Activated naive CD4-positive, alpha-beta T cell treated with anti-CD3 and anti-CD28 coated beads for 36 hours (primary cell): ENCODE measurements at regions of chr17 and their contacts with region 1.

Region 1: GRCh38 chr17:69438776-69439175 is 24.3 kb downstream of the MAP2K6 start:
- DNase-seq: no peak
- H3K4me3 Mint-ChIP-seq: no peak overlapping the region
- H3K27ac Mint-ChIP-seq: no peak overlapping the region
- H3K4me1 Mint-ChIP-seq: peaks cover 6% of the 10 kb centered on the region
- H3K27me3 Mint-ChIP-seq: no peaks in the 10 kb centered on the region

Region 2: DNA sequence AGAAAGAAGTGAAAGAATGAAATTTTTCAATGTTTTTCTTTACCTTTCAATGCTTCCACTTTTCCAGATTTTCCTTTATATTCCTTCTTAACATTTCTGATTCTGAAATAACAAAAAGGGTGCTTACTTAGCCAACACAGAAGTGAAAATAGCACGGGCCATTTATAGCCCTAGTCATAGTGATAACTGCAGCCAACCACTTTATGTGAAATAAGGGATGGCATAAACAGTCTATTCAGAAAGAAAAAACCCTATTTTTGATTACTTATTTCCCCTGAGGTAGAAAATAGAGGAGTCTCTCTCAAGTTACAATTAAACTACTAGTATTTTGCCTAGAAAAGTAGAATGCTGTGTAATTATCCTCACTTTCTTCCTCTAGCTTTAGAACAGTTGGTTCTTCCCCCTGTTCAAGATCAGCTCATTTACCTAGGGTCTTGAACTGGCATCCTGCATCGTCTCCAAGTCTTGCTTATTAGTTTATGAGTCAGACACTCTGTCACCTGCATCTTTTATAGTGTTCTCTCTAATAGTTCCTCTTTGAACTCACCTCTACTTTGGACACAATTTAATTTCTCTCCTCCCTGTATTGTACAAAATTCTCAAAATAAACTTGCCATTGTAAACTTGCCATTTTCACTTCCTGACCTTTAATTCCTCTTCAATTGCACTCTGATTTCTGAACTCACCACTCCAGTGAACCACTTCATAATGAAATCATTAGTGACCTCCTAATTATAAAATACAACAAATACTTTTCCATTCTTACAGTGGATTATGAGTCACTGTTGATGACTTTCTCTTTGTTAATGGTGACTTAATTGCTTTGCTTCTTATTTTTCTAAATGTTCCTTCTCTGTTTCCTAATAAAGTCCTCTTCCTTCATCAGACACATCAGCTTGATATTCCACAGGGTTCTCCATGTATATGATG is 320.7 kb before region 1 on chr17:
- CTCF ChIA-PET with region 1: no interaction called
- intact Hi-C with region 1: no loop called
- DNase-seq: no peak
- H3K4me3 Mint-ChIP-seq: no peak overlapping the region
- H3K27ac Mint-ChIP-seq: no peak overlapping the region
- H3K4me1 Mint-ChIP-seq: no peaks in the 10 kb centered on the region
- H3K27me3 Mint-ChIP-seq: no peaks in the 10 kb centered on the region

Region 3: GRCh38 chr17:69428254-69428980 is 10.4 kb before region 1 on chr17:
- CTCF ChIA-PET with region 1: interaction called, 3 read pairs
- intact Hi-C with region 1: loop called (anchors 1 kb)
- DNase-seq: peak; percentile 23
- H3K4me3 Mint-ChIP-seq: no peak overlapping the region
- H3K27ac Mint-ChIP-seq: no peak overlapping the region
- H3K4me1 Mint-ChIP-seq: peaks cover 68% of the 10 kb centered on the region
- H3K27me3 Mint-ChIP-seq: no peaks in the 10 kb centered on the region